Posterior cingulate gyrus (tissue), 11 donors: ENCODE measurements at regions of chr2 and their contacts with region 1.

Region 1: GRCh38 chr2:36355151-36355889 is at the start of gene CRIM1:
- DNase-seq: peak; percentile 65 to 96 (median 80)

Region 2: GRCh38 chr2:36461039-36461681 is 105.8 kb after region 1 on chr2:
- intact Hi-C with region 1: loop called (anchors 5 kb)
- DNase-seq: no peak

Region 3: GRCh38 chr2:36507408-36507812 is 152.1 kb after region 1 on chr2:
- intact Hi-C with region 1: loop called (anchors 5 kb)
- DNase-seq: peak in 6 of 10 donors; percentile 19 to 82 (median 40)

Region 4: DNA sequence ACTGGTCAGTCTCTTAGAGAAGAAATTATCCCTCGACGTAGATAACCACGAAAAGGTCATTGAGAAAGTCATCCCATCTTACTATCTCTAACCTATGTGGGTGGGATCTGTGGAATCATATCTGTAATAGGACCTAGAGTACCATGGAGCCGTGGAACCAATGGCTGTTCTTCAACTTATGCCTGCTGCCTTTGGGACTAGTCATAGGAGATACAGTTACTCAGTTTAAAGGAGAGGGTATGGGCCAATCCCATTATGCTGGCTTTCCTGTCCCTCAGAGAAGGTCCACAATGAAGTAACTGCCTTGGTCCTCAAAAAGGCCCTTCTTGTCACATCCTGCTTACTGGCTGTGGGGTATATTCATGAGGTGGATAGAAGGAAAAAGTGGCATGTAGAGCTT is 165.1 kb after region 1 on chr2:
- intact Hi-C with region 1: no loop called
- DNase-seq: no peak

Region 5: DNA sequence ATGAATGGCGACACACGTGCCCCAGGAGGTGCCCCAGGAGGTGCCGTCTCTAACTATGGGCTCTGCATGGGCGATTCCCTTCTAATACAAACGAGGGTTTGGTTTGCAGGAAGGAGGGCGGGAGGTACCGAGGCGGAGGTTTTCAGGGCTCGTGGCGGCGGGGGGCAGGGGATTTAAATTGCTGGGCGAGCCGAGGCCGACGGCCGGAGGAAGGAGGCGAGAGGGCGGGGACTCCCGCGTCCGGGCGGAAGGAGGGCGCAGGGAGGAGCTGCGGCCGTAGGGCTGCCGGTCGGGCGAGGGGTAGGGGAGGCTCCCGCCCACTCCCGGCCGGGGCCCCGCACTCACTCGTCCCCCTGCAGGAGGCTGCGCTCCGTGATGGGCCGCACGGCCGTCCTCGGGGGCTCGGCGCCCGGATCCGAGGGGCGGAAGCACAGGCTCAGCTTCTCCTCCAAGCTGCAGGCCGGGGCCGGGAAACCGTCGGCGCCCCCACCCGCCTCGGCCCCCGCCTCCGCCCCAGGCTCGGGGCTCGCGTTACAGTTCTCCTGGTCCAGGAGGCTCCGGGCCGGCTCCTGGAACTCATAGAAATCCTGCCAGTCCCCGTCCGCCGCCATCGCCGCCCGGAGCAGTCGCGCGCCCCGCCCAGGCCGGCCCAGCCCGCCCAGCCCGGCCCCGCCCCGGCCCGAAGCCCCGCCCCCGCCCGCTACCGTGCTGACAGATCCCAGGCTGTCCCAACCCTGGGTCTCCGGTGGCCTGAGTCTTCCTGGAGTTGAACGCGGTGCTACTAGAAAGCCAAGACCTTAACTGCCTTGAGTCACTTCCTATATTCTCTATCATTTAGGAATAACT is 242.4 kb after region 1 on chr2 and contains the start of gene FEZ2:
- intact Hi-C with region 1: loop called (anchors 5 kb)
- DNase-seq: peak; percentile 38 to 95 (median 66)

Region 6: GRCh38 chr2:36663851-36664695 is 308.8 kb after region 1 on chr2:
- intact Hi-C with region 1: loop called (anchors 1 kb)
- DNase-seq: no peak

Region 7: DNA sequence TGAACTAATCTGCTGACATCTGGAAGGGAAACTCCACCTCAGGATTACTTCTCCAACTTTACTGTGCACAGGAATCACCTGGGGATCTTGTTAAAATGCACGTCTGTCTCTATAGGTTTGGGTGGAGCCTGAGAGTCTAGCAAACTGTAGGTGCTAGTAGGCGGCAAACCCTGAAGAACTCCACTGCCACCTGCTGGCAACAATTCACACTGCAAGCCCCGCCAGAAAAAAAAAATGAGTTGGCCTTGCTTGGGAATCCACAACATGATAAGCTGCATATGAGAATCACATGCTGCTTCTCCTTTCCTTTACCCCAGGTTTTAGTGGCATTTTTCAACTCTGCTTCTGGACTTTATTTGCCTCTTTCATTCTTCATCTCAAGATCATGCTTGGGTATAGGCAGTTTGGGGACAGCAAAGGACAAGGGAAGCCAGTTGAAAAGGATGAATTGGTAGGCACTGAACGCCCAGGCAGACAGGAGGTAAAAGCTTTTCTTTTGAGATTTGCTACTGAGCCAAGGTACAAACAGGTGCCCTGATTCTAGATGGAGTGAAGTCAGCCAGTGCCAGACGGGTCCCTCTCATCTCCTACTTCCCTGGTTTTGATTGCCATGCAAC is 430.0 kb after region 1 on chr2:
- intact Hi-C with region 1: loop called (anchors 5 kb)
- DNase-seq: peak in 6 of 10 donors; percentile 27 to 90 (median 58)

Region 8: GRCh38 chr2:36839976-36840617 is 484.8 kb after region 1 on chr2:
- intact Hi-C with region 1: no loop called
- DNase-seq: no peak